ENCODE measurements at regions of chr2 and their contacts with region 1.

Region 1: DNA sequence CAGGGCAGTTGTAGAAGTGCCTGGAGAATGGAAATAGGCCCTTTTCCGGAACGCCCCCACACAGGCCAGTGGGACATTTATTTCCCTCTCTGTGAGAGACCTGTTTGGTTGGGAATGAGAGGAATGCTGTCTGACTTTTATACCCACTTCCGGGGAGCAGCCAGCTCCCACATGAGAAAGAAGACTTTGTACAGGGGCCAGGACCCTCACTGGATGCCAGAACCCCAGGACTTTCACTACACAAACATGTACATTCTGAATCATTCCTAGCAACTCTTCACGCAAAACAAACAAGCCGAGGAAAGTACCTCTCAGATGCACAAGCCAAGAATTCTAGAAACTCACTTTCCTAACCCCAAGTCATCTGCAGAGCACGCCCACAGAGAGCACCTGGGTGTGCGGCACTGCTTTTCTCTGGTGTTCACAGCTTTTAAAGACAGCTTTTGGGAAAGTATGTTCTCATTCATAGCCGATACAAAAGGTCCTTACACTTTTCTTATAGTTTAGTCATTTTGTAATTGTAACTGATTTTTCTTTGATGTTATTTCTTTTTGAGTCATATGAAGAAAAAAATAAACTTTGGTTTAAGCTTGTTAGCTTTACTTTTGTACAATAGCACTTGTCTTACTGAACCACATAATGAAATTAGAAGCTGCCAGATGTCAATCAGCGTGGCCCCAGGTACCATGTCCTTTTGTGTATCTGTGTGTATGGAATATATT is 856.1 kb upstream of the ID2 start:
- DNase-seq: peak; percentile 86
- H3K4me3 Mint-ChIP-seq: no peak overlapping the region
- H3K27ac Mint-ChIP-seq: peak overlapping the region; percentile 86
- H3K4me1 Mint-ChIP-seq: peaks cover 16% of the 10 kb centered on the region
- H3K27me3 Mint-ChIP-seq: no peaks in the 10 kb centered on the region

Region 2: DNA sequence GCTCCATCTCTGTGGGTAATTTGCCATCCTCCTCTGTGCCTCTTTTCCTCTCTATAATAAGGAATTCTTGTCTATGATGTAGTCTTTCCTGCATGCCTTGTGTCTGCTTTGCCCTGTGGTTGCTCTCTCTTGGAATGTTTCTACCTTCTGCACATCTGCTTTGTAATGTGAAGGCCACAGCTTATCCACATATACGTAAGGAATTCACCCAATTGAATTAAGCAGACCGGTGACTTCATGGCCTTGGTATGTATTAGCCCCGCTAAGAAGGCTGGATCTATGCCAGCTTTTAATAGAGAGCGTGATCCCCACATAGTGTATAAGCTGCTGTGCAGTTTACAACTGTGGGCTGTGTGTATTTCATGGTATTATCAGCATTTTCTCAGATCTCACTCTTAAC is 633.8 kb before region 1 on chr2:
- CTCF ChIA-PET with region 1: no interaction called
- intact Hi-C with region 1: loop called (anchors 5 kb)
- DNase-seq: no peak
- H3K4me3 Mint-ChIP-seq: no peak overlapping the region
- H3K27ac Mint-ChIP-seq: no peak overlapping the region
- H3K4me1 Mint-ChIP-seq: peaks cover 15% of the 10 kb centered on the region
- H3K27me3 Mint-ChIP-seq: no peaks in the 10 kb centered on the region

Region 3: DNA sequence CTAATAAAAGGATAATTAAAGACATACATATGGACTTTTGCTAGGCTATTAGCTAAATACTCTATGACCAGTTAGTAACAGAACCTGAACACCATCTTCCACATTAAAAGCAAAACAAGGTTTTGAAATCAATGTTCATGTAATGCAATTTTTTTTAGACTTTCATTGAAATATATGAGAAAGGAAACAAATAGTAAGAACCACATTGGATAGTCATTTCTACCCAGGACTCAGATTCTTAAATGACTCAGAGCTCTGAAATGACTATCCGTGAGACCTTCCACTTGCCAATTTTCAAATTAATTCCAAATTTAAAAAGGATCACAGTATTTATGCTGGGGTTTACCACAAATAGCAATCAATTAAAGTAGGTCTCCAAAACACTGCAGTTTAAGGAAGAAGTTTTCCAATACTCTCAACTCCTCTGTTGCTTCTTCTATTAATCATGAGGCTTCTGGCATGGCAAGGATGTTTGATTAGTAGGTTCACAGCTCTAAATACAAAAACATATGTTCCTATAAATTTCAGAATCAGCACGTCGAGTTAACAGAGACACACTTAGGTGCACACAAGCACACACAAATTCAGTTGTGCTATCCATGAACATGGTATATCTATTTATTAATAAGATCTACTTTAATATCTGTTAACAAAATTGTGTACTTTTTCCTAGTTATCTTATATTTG is 67.5 kb before region 1 on chr2:
- CTCF ChIA-PET with region 1: no interaction called
- intact Hi-C with region 1: loop called (anchors 1 kb)
- DNase-seq: no peak
- H3K4me3 Mint-ChIP-seq: no peak overlapping the region
- H3K27ac Mint-ChIP-seq: no peak overlapping the region
- H3K4me1 Mint-ChIP-seq: peaks cover 12% of the 10 kb centered on the region
- H3K27me3 Mint-ChIP-seq: peaks cover 12% of the 10 kb centered on the region

Region 4: GRCh38 chr2:7930800-7931635 is 105.3 kb after region 1 on chr2:
- CTCF ChIA-PET with region 1: no interaction called
- intact Hi-C with region 1: loop called (anchors 1 kb)
- DNase-seq: peak; percentile 45
- H3K4me3 Mint-ChIP-seq: no peak overlapping the region
- H3K27ac Mint-ChIP-seq: peak overlapping the region; percentile 74
- H3K4me1 Mint-ChIP-seq: peaks cover 19% of the 10 kb centered on the region
- H3K27me3 Mint-ChIP-seq: no peaks in the 10 kb centered on the region

Region 5: DNA sequence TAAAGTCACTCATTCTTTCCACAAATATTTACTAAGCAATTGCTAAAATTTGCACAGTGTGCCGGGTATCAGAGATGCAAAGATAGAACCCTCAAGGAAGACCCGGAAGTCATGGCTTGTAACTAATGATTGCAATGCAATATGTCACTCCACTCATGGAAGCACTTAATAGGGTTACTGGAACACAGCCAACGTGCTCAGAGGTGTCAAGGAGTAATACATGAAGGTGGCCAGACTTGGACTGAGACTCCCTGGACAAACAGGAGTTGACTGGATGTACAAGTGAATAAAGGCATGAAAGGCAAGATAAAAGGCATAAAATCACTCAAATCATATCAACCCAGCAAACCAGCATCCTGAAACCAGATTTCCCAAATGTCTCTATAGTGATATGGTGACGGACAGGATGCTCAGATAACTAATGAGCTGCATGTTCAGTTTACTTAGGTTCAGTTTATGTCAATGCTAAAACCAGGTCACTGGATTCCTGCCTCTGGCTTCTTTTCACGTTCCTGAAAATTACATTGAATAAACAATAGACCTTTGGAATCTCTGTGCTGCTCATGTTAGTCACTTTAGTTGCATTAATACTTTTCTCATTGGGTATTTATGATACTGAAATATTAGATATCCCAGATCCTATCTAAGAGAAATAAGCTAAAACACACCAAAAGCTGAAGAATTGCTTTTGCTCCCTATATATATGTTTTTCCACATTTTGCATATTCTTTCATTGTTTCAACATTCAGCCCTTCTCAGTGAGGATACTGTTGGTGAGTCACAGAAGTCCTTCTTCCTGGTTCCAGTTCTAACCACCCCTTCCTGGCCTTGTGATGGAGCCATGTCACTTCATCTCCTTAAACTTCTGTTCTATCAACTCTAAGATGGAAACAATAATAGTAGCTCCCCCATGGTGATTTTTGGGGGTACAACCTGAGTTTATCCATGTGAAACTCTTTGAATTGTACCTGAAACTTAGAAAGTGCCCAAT is 167.2 kb after region 1 on chr2:
- CTCF ChIA-PET with region 1: no interaction called
- intact Hi-C with region 1: no loop called
- DNase-seq: no peak
- H3K4me3 Mint-ChIP-seq: no peak overlapping the region
- H3K27ac Mint-ChIP-seq: no peak overlapping the region
- H3K4me1 Mint-ChIP-seq: peaks cover 4% of the 10 kb centered on the region
- H3K27me3 Mint-ChIP-seq: peaks cover 7% of the 10 kb centered on the region

Region 6: GRCh38 chr2:8154936-8155335 is 329.2 kb after region 1 on chr2:
- CTCF ChIA-PET with region 1: no interaction called
- intact Hi-C with region 1: loop called (anchors 1 kb)
- DNase-seq: peak; percentile 68
- H3K4me3 Mint-ChIP-seq: no peak overlapping the region
- H3K27ac Mint-ChIP-seq: peak overlapping the region; percentile 78
- H3K4me1 Mint-ChIP-seq: peaks cover 16% of the 10 kb centered on the region
- H3K27me3 Mint-ChIP-seq: no peaks in the 10 kb centered on the region

Region 7: DNA sequence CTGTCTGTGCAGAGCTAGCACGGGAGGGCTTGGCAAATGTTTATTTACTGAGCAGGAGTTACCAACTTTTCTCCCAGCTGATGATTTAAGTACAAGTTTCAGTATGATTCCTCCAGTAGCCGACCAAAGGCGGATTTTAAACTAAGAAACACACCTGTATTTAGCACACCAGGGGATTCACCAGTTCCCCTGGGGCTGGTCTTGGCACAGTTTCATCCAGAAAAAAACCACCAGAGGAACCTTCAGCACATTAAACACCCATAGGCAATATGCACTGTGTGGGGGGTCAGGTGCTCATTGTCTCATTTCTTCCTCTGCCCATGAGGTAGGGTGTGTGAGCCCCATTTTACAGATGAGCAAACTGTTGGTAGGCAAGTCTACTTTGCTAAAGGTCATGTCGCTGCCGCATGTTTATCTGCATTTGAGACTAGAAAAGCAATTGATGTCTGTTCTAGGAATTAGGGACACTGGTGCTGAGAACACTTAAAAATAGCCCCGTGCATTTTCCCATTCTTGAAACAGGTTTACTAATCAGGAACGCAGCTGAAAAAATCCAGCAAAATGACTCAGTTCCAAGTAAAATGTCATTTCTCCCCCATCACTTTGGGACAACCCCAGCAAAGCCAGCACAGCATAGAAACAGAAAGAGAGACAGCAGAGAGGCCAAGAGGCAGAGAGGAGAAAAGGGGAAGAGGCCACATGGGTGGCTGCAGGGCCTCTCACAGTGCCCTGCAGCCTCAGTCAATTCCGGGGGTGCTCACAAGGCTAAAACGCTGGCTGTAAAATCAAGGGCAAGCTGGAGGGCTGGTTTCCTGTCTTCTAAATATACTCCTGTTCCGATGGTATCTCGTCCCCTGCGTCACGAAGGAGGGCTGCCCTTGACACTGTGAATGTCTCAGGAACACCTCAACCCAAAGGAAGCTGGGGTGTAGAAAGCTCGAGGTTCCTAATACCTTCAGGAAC is 689.3 kb after region 1 on chr2:
- CTCF ChIA-PET with region 1: no interaction called
- intact Hi-C with region 1: loop called (anchors 1 kb)
- DNase-seq: peak; percentile 84
- H3K4me3 Mint-ChIP-seq: peak overlapping the region; percentile 42
- H3K27ac Mint-ChIP-seq: peak overlapping the region; percentile 96
- H3K4me1 Mint-ChIP-seq: peaks cover 46% of the 10 kb centered on the region
- H3K27me3 Mint-ChIP-seq: no peaks in the 10 kb centered on the region

Measured in activated naive CD4-positive, alpha-beta T cell treated with anti-CD3 and anti-CD28 coated beads for 36 hours (primary cell).